ENCODE measurements at regions of chr5 and their contacts with region 1.

Region 1: DNA sequence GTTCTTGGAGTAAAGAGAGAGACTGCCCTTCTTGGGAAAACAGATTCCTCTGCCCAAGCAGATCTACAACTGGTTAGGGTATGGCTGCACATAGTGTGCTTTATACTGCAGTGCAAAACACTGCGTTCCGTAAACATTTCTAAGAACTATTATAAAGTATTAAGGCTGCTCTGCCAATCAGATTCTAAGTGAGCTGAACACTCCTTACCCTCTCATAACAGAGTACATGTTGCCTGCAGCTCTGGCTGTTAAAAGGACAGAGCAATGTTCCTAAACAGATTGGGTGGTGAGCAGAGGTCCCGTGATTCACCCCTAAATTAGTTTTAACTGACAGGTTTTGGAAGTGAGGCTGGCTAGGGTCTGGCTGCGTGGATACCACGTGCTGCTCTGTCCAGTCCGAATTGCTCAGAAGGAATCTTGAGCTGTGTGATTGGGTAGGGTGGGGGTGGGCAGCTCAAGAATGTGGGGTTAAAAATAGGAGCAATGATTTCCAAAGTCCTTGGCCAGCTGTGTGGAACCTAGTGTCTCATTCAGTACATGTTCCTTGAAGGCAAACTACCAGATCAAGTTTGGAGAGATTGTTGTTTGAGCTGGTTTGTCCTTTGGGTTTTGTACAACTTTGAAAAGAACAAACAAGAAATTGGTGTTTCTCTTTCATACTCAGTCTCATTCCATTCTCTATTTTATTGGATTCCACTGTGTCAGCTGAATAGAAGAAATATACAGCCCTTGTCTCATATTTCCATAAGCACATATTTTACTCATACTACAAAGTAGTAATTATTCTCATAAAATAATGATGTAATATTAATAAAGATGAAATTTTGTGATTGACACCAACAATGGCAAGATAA is 497.6 kb upstream of the CD180 start:
- DNase-seq: peak; percentile 47 to 73
- ATAC-seq: peak; percentile 95 to 99 (median 96)
- H3K4me3 ChIP-seq: no peak overlapping the region
- H3K27ac ChIP-seq: peak overlapping the region in 9 of 10 donors; percentile 21 to 83 (median 74)
- H3K4me1 ChIP-seq: peaks cover 3 to 20% (median 11%) of the 10 kb centered on the region in 9 donors
- H3K27me3 ChIP-seq: no peaks in the 10 kb centered on the region
- CTCF ChIP-seq: no peak

Region 2: DNA sequence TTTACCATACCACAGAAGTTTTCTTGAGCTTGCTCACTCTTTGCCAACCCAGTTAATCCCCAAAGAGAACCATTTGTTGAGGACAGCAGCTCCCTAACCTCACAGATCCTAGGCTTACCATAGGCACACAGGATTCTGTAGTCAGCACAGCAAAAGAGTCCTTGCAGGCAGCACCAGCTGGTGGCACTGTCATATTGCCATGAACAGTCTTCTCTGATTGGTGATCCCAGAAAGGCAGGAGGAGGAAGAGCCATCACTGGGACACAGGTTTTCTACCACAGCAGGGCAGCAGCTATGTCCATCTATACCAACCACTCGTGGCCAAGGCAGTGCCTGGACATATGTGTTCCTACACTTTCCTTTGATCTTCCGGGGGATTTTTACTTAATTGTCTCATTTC is 200.5 kb before region 1 on chr5:
- intact Hi-C with region 1: loop called in 1 of 10 experiments (anchors 10 kb)
- DNase-seq: peak; percentile 13 to 44
- ATAC-seq: peak; percentile 55 to 95 (median 91)
- H3K4me3 ChIP-seq: no peak overlapping the region
- H3K27ac ChIP-seq: no peak overlapping the region
- H3K4me1 ChIP-seq: peaks cover 0 to 13% (median 0%) of the 10 kb centered on the region in 9 donors
- H3K27me3 ChIP-seq: no peaks in the 10 kb centered on the region
- CTCF ChIP-seq: peak in 7 of 9 donors; percentile 35 to 65 (median 58)

Region 3: DNA sequence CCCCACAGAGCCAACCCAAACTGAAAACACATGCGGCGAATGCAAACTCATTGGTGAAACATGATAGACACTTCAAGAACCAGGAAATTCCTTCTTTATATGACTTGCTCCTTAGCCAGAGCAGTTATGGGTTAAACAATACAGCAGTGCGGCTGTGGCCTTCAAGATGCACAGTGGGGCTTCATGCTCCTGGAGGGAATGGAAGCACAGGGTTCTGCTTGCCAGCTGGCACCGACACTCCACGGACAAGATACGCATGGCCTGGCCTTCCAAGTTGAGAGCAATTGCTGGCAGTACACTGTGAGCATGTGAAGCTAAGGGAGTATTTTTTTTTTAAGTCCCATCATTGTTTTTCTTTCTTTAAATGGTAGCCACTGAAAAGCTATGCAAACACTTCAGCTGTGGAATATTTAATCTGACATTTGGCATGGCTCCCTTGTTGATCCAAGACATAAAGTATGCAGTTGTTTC is 45.9 kb before region 1 on chr5:
- intact Hi-C with region 1: loop called in 1 of 10 experiments (anchors 5 kb)
- DNase-seq: peak; percentile 73 to 74
- ATAC-seq: peak; percentile 84 to 99 (median 94)
- H3K4me3 ChIP-seq: no peak overlapping the region
- H3K27ac ChIP-seq: peak overlapping the region in 7 of 10 donors; percentile 2 to 81 (median 62)
- H3K4me1 ChIP-seq: peaks cover 0 to 31% (median 13%) of the 10 kb centered on the region in 9 donors
- H3K27me3 ChIP-seq: no peaks in the 10 kb centered on the region
- CTCF ChIP-seq: no peak

Region 4: GRCh38 chr5:67659288-67659687 is 34.9 kb before region 1 on chr5:
- intact Hi-C with region 1: loop called in 1 of 10 experiments (anchors 5 kb)
- DNase-seq: no peak
- ATAC-seq: peak; percentile 52 to 85 (median 76)
- H3K4me3 ChIP-seq: no peak overlapping the region
- H3K27ac ChIP-seq: no peak overlapping the region
- H3K4me1 ChIP-seq: peaks cover 0 to 7% (median 0%) of the 10 kb centered on the region in 9 donors
- H3K27me3 ChIP-seq: no peaks in the 10 kb centered on the region
- CTCF ChIP-seq: no peak

Region 5: GRCh38 chr5:67809589-67809988 is 115.4 kb after region 1 on chr5:
- intact Hi-C with region 1: loop called in 3 of 10 experiments (anchors 2 to 10 kb)
- DNase-seq: no peak
- ATAC-seq: no peak
- H3K4me3 ChIP-seq: no peak overlapping the region
- H3K27ac ChIP-seq: peak overlapping the region in 8 of 10 donors; percentile 13 to 88 (median 80)
- H3K4me1 ChIP-seq: peaks cover 2 to 41% (median 18%) of the 10 kb centered on the region in 9 donors
- H3K27me3 ChIP-seq: no peaks in the 10 kb centered on the region
- CTCF ChIP-seq: no peak

Region 6: DNA sequence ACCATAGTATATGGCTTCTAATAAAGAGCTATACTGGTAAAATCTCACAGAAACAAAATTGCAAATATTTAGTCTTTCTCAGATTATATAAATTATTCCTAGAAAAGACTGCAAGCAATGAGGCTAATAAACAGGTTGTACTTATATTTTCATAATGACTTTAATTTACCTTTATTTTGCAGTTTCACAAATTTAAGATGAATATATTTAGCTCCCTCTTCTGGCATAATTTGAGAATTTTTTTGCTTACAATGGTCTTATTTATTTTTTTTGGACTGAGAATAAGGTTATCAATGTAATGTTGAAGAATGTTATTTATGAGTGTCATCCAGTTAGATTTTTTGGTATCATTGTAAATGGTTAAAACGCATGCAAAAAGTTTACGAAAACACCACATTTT is 578.1 kb after region 1 on chr5:
- intact Hi-C with region 1: loop called in 1 of 10 experiments (anchors 5 kb)
- DNase-seq: no peak
- ATAC-seq: no peak
- H3K4me3 ChIP-seq: no peak overlapping the region
- H3K27ac ChIP-seq: peak overlapping the region in 6 of 10 donors; percentile 51 to 92 (median 76)
- H3K4me1 ChIP-seq: peaks cover 13 to 99% (median 78%) of the 10 kb centered on the region in 9 donors
- H3K27me3 ChIP-seq: no peaks in the 10 kb centered on the region
- CTCF ChIP-seq: peak in 8 of 9 donors; percentile 7 to 64 (median 48)